ENCODE measurements at regions of chr20 and their contacts with region 1.

Region 1: DNA sequence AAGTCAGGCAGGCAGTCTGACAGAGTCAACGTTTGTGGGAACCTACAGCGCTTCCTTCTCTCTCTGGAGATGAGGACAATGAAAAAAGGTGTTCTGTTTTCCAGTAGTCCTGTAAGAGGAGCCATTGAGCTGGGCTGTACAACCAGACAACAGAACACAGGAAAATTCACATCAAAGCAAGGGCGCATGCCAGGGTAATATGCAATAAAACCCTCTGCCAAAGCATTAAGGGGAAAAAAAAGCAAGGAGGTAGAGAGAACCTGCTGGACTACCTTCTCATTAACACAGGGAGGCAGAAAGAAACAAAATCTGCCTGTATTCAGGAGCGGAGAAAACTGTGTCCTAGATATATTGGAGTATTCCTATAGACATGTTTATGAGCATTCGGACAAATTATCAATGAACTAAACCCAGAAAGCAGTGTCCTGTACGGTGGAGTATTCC is 1.3 kb downstream of the RNF24 start:
- DNase-seq: peak; percentile 77
- H3K4me3 ChIP-seq: peak overlapping the region in 1 of 3 experiments; percentile 68
- H3K27ac ChIP-seq: no peak overlapping the region
- H3K4me1 ChIP-seq: peaks cover 10% of the 10 kb centered on the region
- H3K27me3 ChIP-seq: no peaks in the 10 kb centered on the region
- CTCF ChIP-seq: peak; percentile 46 to 53
- POLR2A ChIP-seq: no peak

Region 2: GRCh38 chr20:3595541-3595940 is 418.5 kb before region 1 on chr20:
- CTCF ChIA-PET with region 1: no interaction called
- POLR2A ChIA-PET with region 1: no interaction called
- dilution Hi-C with region 1: no loop called
- intact Hi-C with region 1: no loop called
- DNase-seq: no peak
- H3K4me3 ChIP-seq: no peak overlapping the region
- H3K27ac ChIP-seq: no peak overlapping the region
- H3K4me1 ChIP-seq: no peaks in the 10 kb centered on the region
- H3K27me3 ChIP-seq: no peaks in the 10 kb centered on the region
- CTCF ChIP-seq: no peak
- POLR2A ChIP-seq: no peak

Region 3: DNA sequence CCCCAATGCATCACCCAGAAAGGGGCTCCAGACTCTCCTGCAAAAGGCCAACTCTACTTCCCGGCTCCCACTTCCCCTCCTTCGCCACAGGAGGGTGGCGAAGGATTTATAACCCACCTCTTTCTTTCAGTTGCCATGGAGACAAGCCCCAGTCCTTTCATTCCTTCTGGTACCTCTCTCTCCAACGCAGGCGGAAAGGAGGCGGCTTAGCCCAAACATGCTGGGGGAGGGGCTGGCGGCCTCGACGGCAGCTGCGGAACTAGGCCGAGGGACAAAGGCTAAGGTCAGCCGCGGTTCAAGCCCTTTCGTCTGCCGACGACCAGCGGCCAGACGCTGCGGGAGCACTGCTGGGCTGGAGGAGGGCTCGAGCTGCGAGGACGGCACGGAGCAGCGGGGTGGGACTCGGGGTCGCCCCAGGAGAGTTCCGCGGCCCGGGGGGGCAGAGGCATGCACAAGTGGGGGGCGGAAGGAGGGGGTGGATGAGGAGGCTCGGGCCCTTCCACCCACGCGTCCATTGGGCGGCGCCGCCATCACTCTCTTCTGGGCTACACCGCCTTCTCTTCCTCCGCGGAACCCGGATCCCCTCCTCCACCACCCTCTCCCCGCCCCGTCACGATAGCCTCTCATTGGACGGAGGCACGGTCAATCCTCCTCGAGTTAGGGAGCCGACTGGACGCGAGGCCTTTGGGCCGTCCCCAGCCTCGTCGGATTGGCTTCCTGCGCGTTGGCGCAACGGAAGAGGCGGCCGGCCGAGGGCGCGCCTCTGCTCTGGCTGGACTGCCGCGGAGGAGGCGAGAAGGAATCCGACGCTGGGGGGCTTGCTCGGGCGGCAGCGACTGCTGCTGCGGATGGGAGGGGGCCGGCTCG is 125.2 kb before region 1 on chr20 and contains the start of gene PANK2:
- CTCF ChIA-PET with region 1: interaction called, 6 read pairs
- POLR2A ChIA-PET with region 1: no interaction called
- dilution Hi-C with region 1: no loop called
- intact Hi-C with region 1: loop called (anchors 1 kb)
- DNase-seq: peak; percentile 99
- H3K4me3 ChIP-seq: peak within 1 kb of the TSS; percentile 87 to 100 (median 99)
- H3K27ac ChIP-seq: peak within 1 kb of the TSS; percentile 93
- H3K4me1 ChIP-seq: peaks cover 40% of the 10 kb centered on the region
- H3K27me3 ChIP-seq: no peaks in the 10 kb centered on the region
- CTCF ChIP-seq: peak; percentile 28 to 46
- POLR2A ChIP-seq: peak; percentile 92
- total RNA-seq, gene PANK2: 54.3 and 55.3 TPM in 2 replicates

Region 4: DNA sequence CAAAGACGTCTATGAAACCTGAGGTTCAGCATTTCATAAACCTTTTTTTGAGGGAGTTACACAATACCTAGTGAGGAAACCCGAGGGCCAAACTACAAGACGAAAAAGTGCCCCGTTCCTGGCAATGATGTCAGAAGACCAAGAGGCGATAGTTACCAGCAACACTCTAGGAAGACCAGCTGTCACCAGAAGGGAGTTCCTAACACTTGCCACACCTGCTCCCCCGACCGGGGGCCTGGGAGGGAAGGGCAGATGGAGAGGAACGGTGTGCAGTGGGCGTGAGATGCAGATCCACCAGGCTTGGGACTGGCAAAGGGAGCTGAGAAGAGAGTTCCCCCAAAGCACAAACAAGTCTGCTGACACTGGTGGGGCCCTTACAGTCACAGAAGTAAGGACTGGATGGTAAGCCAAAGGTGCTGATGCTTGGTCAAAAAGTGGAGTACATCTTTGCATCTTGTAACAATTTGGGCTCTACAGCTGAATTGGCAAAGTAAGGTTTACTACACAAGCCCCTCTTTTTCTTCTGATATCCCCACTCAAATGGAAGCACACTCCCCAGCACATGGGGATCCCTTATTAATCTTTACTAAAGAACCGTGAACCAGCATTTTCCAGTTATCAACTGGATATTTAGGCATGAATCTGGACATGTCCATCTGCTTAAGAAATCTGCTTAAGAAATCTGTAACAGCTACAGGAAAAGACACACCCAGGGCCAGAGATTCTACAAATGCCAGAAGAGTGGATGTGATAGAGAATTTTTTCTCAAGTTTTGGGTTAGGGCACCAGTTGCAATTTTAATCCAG is 86.4 kb before region 1 on chr20:
- CTCF ChIA-PET with region 1: no interaction called
- POLR2A ChIA-PET with region 1: no interaction called
- dilution Hi-C with region 1: no loop called
- intact Hi-C with region 1: loop called (anchors 2 kb)
- DNase-seq: no peak
- H3K4me3 ChIP-seq: no peak overlapping the region
- H3K27ac ChIP-seq: no peak overlapping the region
- H3K4me1 ChIP-seq: peaks cover 9% of the 10 kb centered on the region
- H3K27me3 ChIP-seq: no peaks in the 10 kb centered on the region
- CTCF ChIP-seq: no peak
- POLR2A ChIP-seq: no peak

Region 5: GRCh38 chr20:4064144-4064909 is 50.3 kb after region 1 on chr20:
- CTCF ChIA-PET with region 1: interaction called, 29 read pairs
- POLR2A ChIA-PET with region 1: no interaction called
- dilution Hi-C with region 1: no loop called
- intact Hi-C with region 1: loop called (anchors 1 kb)
- DNase-seq: peak; percentile 96
- H3K4me3 ChIP-seq: peak overlapping the region in 1 of 3 experiments; percentile 8
- H3K27ac ChIP-seq: peak overlapping the region; percentile 90
- H3K4me1 ChIP-seq: peaks cover 41% of the 10 kb centered on the region
- H3K27me3 ChIP-seq: no peaks in the 10 kb centered on the region
- CTCF ChIP-seq: no peak
- POLR2A ChIP-seq: no peak